Activated B cell treated with CpG ODN at 0.5 μM for 24 hours (primary cell): ENCODE measurements at regions of chr5 and their contacts with region 1.

Region 1: GRCh38 chr5:127030259-127031146 is at the start of gene MARCHF3:
- DNase-seq: peak; percentile 98
- ATAC-seq: peak; percentile 93
- H3K4me3 Mint-ChIP-seq: peak within 1 kb of the TSS; percentile 94
- H3K27ac Mint-ChIP-seq: peak within 1 kb of the TSS; percentile 90
- H3K4me1 Mint-ChIP-seq: peaks cover 45% of the 10 kb centered on the region
- H3K27me3 Mint-ChIP-seq: no peaks in the 10 kb centered on the region
- CTCF ChIP-seq: no peak
- total RNA-seq, gene MARCHF3: 21.9 and 22.8 TPM in 2 replicates

Region 2: DNA sequence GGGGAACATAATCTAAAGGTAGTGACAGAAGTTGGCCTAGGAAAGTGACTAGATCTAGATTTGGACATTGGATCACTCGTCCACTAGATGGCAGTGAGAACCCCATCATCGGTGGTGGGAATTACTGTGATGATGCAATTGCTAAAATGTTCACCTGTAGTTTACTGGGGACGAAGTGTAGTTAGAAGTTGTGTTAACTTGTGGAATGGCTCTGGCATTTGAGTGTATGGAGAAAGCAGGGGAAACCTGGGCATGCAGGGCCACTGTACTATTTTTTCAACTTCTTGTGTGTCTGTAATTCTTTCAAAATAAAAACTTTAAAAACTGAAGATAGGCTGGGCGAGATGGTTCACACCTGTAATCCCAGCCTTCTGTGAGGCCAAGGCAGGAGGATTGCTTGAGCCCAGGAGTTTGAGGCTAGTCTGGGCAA is 354.3 kb before region 1 on chr5:
- CTCF ChIA-PET with region 1: no interaction called
- POLR2A ChIA-PET with region 1: no interaction called
- intact Hi-C with region 1: loop called (anchors 2 kb)
- DNase-seq: peak; percentile 19
- ATAC-seq: peak; percentile 82
- H3K4me3 Mint-ChIP-seq: no peak overlapping the region
- H3K27ac Mint-ChIP-seq: peak overlapping the region; percentile 4
- H3K4me1 Mint-ChIP-seq: peaks cover 3% of the 10 kb centered on the region
- H3K27me3 Mint-ChIP-seq: no peaks in the 10 kb centered on the region
- CTCF ChIP-seq: peak; percentile 67

Region 3: DNA sequence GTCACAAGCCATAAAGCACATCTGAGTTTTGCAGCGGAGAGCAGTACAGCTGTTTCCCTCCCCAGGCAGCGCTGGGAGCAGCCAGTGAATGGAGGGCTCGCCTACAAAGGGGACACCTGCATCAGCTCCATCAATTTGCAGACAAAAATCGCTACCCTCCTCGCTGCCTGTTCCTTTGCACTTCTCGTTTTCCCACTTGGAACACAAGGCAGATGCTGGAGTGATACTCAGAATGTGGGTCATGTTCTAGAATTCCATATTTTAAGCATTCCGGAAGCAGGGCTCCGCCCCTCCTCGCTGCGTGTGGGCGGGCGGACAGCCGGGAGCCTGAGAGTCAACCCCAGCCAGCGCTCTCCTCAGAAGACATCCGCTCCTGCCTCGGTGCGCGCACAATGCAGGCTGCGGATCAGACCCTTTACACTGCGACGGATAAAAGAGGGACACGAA is 161.5 kb before region 1 on chr5:
- CTCF ChIA-PET with region 1: no interaction called
- POLR2A ChIA-PET with region 1: no interaction called
- intact Hi-C with region 1: loop called (anchors 5 kb)
- DNase-seq: peak; percentile 20
- ATAC-seq: no peak
- H3K4me3 Mint-ChIP-seq: peak overlapping the region; percentile 81
- H3K27ac Mint-ChIP-seq: peak overlapping the region; percentile 63
- H3K4me1 Mint-ChIP-seq: peaks cover 14% of the 10 kb centered on the region
- H3K27me3 Mint-ChIP-seq: no peaks in the 10 kb centered on the region
- CTCF ChIP-seq: no peak

Region 4: GRCh38 chr5:126954981-126955380 is 75.5 kb before region 1 on chr5:
- CTCF ChIA-PET with region 1: no interaction called
- POLR2A ChIA-PET with region 1: no interaction called
- intact Hi-C with region 1: no loop called
- DNase-seq: no peak
- ATAC-seq: no peak
- H3K4me3 Mint-ChIP-seq: no peak overlapping the region
- H3K27ac Mint-ChIP-seq: no peak overlapping the region
- H3K4me1 Mint-ChIP-seq: peaks cover 7% of the 10 kb centered on the region
- H3K27me3 Mint-ChIP-seq: no peaks in the 10 kb centered on the region
- CTCF ChIP-seq: no peak

Region 5: DNA sequence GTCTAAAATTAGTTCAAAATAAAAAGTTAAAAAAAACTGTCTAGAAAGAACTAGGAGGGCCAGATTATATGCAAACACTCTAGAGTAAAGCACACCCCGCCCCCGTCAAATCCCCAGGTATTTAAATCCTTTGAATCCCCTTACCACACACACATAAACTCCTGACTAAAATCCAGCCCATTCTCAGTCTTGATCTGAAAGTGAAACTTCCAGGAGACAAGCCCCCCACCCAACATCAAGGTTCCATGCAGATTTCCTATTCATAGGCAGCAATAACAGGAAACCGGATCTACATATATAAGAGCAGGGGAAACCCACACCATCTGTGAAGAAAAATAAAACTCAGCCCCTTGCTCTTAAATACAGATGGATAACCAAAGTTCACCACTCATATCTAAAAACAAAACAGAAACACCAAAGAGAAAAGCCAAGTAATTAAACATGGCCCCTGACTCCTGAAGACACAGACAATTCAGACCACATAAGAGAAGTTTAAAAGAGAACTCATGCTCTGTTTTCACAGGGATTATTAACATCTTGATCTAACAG is 42.4 kb before region 1 on chr5:
- CTCF ChIA-PET with region 1: no interaction called
- POLR2A ChIA-PET with region 1: interaction called, 6 read pairs
- intact Hi-C with region 1: loop called (anchors 1 kb)
- DNase-seq: no peak
- ATAC-seq: peak; percentile 84
- H3K4me3 Mint-ChIP-seq: peak overlapping the region; percentile 82
- H3K27ac Mint-ChIP-seq: peak overlapping the region; percentile 97
- H3K4me1 Mint-ChIP-seq: peaks cover 88% of the 10 kb centered on the region
- H3K27me3 Mint-ChIP-seq: no peaks in the 10 kb centered on the region
- CTCF ChIP-seq: no peak

Region 6: GRCh38 chr5:127229185-127229889 is 198.8 kb after region 1 on chr5:
- CTCF ChIA-PET with region 1: no interaction called
- POLR2A ChIA-PET with region 1: interaction called, 7 read pairs
- intact Hi-C with region 1: loop called (anchors 1 kb)
- DNase-seq: peak; percentile 62
- ATAC-seq: peak; percentile 86
- H3K4me3 Mint-ChIP-seq: peak overlapping the region; percentile 85
- H3K27ac Mint-ChIP-seq: no peak overlapping the region
- H3K4me1 Mint-ChIP-seq: peaks cover 18% of the 10 kb centered on the region
- H3K27me3 Mint-ChIP-seq: no peaks in the 10 kb centered on the region
- CTCF ChIP-seq: no peak